ENCODE measurements at regions of chrX and their contacts with region 1.

Region 1: GRCh38 chrX:123408821-123409737 is 225.0 kb downstream of the GRIA3 start:
- DNase-seq: peak; percentile 57
- ATAC-seq: peak; percentile 77
- H3K4me3 ChIP-seq: no peak overlapping the region; the same call in 1 of the 2 replicates
- H3K27ac ChIP-seq: peak overlapping the region; percentile 86
- H3K4me1 ChIP-seq: peaks cover 16% of the 10 kb centered on the region
- H3K27me3 ChIP-seq: no peaks in the 10 kb centered on the region
- CTCF ChIP-seq: no peak
- EP300 ChIP-seq: peak in 1 of 2 experiments; percentile 36; a peak in 2 of 4 replicates
- POLR2A ChIP-seq: no peak
- RAD21 ChIP-seq: no peak

Region 2: GRCh38 chrX:122269243-122269781 is 1139.8 kb before region 1 on chrX:
- CTCF ChIA-PET with region 1: no interaction called
- POLR2A ChIA-PET with region 1: no interaction called
- RAD21 ChIA-PET with region 1: no interaction called
- SMC1A ChIA-PET with region 1: no interaction called
- in situ Hi-C with region 1: no loop called
- intact Hi-C with region 1: loop called (anchors 10 kb)
- DNase-seq: no peak
- ATAC-seq: peak; percentile 75
- H3K4me3 ChIP-seq: no peak overlapping the region
- H3K27ac ChIP-seq: no peak overlapping the region
- H3K4me1 ChIP-seq: no peaks in the 10 kb centered on the region
- H3K27me3 ChIP-seq: no peaks in the 10 kb centered on the region
- CTCF ChIP-seq: no peak
- EP300 ChIP-seq: 0 out of 4 replicates have a peak, but pooled peaks of 1 of the 2 experiments have one; percentile 9
- POLR2A ChIP-seq: no peak
- RAD21 ChIP-seq: no peak

Region 3: GRCh38 chrX:123277821-123278423 is 131.2 kb before region 1 on chrX:
- CTCF ChIA-PET with region 1: interaction called, 7 read pairs
- POLR2A ChIA-PET with region 1: interaction called, 3 read pairs
- RAD21 ChIA-PET with region 1: interaction called, 9 read pairs
- SMC1A ChIA-PET with region 1: interaction called, 16 read pairs
- in situ Hi-C with region 1: no loop called
- intact Hi-C with region 1: no loop called
- DNase-seq: no peak
- ATAC-seq: peak; percentile 59
- H3K4me3 ChIP-seq: no peak overlapping the region
- H3K27ac ChIP-seq: no peak overlapping the region
- H3K4me1 ChIP-seq: no peaks in the 10 kb centered on the region
- H3K27me3 ChIP-seq: no peaks in the 10 kb centered on the region
- CTCF ChIP-seq: peak; percentile 11 to 21 (median 11); a peak in 3 of 6 replicates
- EP300 ChIP-seq: no peak
- POLR2A ChIP-seq: no peak
- RAD21 ChIP-seq: peak; percentile 28; the same call in 1 of the 2 replicates

Region 4: GRCh38 chrX:123308663-123309062 is 100.4 kb before region 1 on chrX:
- CTCF ChIA-PET with region 1: no interaction called
- POLR2A ChIA-PET with region 1: interaction called, 10 read pairs
- RAD21 ChIA-PET with region 1: no interaction called
- SMC1A ChIA-PET with region 1: no interaction called
- in situ Hi-C with region 1: no loop called
- intact Hi-C with region 1: no loop called
- DNase-seq: no peak
- ATAC-seq: no peak
- H3K4me3 ChIP-seq: no peak overlapping the region
- H3K27ac ChIP-seq: no peak overlapping the region
- H3K4me1 ChIP-seq: no peaks in the 10 kb centered on the region
- H3K27me3 ChIP-seq: no peaks in the 10 kb centered on the region
- CTCF ChIP-seq: no peak
- EP300 ChIP-seq: no peak
- POLR2A ChIP-seq: no peak
- RAD21 ChIP-seq: no peak

Region 5: GRCh38 chrX:123324625-123325024 is 84.5 kb before region 1 on chrX:
- CTCF ChIA-PET with region 1: interaction called, 5 read pairs
- POLR2A ChIA-PET with region 1: interaction called, 3 read pairs
- RAD21 ChIA-PET with region 1: interaction called, 10 read pairs
- SMC1A ChIA-PET with region 1: interaction called, 9 read pairs
- in situ Hi-C with region 1: no loop called
- intact Hi-C with region 1: no loop called
- DNase-seq: no peak
- ATAC-seq: peak; percentile 76
- H3K4me3 ChIP-seq: no peak overlapping the region
- H3K27ac ChIP-seq: no peak overlapping the region
- H3K4me1 ChIP-seq: no peaks in the 10 kb centered on the region
- H3K27me3 ChIP-seq: no peaks in the 10 kb centered on the region
- CTCF ChIP-seq: no peak
- EP300 ChIP-seq: no peak
- POLR2A ChIP-seq: no peak
- RAD21 ChIP-seq: no peak

Region 6: DNA sequence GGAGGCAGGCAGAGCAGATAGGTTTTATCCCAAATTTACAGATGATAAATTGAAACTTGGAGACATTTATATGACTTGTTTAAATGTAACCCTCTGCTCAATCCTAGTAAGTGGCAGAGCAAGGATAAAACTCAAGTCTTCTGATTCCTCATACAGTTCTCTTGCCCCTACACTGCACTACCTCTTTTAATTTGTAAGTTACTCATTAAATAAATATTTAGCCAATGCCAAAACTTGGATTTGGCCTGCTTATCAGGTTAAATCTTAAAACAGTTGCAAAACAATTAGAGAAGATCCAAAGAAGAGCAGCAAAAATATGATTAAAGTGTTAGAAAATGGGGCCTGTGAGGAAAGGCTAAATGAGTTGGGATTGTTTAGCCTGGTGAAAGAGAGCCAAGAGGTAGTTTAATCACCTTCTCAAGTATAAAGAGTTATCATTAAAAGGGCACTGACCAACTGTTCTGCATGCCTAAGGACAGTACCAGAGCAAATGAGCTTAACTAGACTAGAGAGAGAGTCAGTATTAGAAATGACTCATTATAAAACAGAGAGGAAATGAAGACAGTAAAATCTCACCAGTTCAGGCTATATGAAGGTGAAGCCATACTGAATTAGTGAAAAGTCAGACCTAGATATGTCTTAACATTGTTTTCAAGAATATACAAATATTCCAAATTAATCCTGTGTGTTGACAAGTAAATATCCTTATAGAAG is 78.7 kb before region 1 on chrX:
- CTCF ChIA-PET with region 1: interaction called, 5 read pairs
- POLR2A ChIA-PET with region 1: interaction called, 4 read pairs
- RAD21 ChIA-PET with region 1: interaction called, 14 read pairs
- SMC1A ChIA-PET with region 1: interaction called, 9 read pairs
- in situ Hi-C with region 1: no loop called
- intact Hi-C with region 1: no loop called
- DNase-seq: no peak
- ATAC-seq: peak; percentile 97
- H3K4me3 ChIP-seq: no peak overlapping the region
- H3K27ac ChIP-seq: no peak overlapping the region
- H3K4me1 ChIP-seq: peaks cover 6% of the 10 kb centered on the region
- H3K27me3 ChIP-seq: no peaks in the 10 kb centered on the region
- CTCF ChIP-seq: no peak
- EP300 ChIP-seq: no peak
- POLR2A ChIP-seq: no peak
- RAD21 ChIP-seq: no peak

Region 7: DNA sequence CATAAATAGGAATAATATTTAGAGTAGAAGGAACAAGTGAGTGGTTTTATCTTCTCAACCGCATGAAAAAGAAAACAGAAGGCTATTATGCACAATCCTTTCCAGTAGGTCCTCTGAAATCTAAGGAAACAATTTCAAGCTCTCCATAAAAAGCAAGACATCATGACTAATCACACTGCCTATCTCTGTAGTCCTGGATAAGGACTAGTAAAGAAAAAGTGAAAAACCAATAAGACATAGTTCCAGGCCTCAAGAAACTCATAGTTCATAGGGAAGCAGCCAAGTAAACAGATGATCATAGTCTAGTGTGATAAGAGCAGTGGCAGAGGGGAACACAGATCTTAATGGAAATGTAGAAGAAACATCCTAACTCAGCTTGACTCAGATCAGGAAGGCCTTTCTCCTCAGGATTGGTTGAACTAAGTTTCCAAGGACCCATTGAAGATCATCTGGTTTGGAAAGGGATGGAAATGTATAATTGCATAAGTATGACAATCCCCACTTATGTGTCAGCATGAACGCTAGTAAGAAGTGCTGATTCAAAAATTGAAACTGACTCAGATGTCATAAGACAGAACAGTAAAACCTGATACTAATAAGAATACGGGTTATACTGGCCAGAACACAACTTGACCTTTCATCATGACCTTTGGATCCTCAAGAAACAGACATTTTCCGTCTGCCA is 69.7 kb before region 1 on chrX:
- CTCF ChIA-PET with region 1: interaction called, 4 read pairs
- POLR2A ChIA-PET with region 1: interaction called, 3 read pairs
- RAD21 ChIA-PET with region 1: interaction called, 13 read pairs
- SMC1A ChIA-PET with region 1: interaction called, 27 read pairs
- in situ Hi-C with region 1: no loop called
- intact Hi-C with region 1: loop called (anchors 2 kb)
- DNase-seq: no peak
- ATAC-seq: peak; percentile 84
- H3K4me3 ChIP-seq: no peak overlapping the region
- H3K27ac ChIP-seq: no peak overlapping the region
- H3K4me1 ChIP-seq: no peaks in the 10 kb centered on the region
- H3K27me3 ChIP-seq: no peaks in the 10 kb centered on the region
- CTCF ChIP-seq: no peak
- EP300 ChIP-seq: peak in 1 of 2 experiments; percentile 53; a peak in 1 of 4 replicates
- POLR2A ChIP-seq: no peak
- RAD21 ChIP-seq: no peak

Measured in GM12878 (cell line).